GM10248 (cell line): ENCODE measurements at regions of chr1 and their contacts with region 1.

Region 1: DNA sequence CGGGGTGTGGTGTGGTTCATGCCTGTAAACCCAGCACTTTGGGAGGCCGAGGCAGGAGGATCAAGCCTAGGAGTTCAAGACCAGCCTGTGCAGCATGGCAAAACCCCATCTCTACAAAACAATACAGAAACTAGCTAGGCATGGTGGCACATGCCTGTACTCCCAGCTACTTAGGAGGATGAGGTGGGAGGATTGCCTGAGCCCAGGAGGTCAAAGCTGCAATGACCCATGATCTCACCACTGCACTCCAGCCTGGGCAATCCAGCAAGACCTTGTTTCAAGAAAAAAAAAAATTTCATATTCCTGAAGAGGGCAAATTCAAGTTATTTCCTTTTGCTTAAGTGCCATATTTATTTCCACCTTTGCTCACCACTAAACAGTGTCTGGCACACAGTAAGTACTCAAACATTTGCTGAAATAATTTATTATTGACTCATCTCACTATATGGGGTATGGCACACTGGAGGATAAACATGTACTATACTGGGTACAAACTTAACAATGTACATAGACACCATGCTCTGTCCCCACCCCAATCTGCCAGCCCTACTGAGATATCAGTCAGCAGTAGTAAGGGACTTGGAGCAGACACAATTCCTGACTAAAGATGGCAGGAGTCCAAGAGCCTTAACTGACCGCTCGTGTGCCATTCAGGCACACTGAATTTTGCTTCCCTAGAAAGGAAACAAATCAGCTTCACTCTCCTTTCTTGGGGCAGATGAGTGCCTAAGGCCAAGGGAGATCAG is 15.5 kb downstream of the MEAF6 start:
- DNase-seq: no peak
- CTCF ChIP-seq: no peak

Region 2: GRCh38 chr1:37391211-37392011 is 107.6 kb before region 1 on chr1:
- CTCF ChIA-PET with region 1: no interaction called
- POLR2A ChIA-PET with region 1: no interaction called
- DNase-seq: no peak
- CTCF ChIP-seq: no peak

Region 3: DNA sequence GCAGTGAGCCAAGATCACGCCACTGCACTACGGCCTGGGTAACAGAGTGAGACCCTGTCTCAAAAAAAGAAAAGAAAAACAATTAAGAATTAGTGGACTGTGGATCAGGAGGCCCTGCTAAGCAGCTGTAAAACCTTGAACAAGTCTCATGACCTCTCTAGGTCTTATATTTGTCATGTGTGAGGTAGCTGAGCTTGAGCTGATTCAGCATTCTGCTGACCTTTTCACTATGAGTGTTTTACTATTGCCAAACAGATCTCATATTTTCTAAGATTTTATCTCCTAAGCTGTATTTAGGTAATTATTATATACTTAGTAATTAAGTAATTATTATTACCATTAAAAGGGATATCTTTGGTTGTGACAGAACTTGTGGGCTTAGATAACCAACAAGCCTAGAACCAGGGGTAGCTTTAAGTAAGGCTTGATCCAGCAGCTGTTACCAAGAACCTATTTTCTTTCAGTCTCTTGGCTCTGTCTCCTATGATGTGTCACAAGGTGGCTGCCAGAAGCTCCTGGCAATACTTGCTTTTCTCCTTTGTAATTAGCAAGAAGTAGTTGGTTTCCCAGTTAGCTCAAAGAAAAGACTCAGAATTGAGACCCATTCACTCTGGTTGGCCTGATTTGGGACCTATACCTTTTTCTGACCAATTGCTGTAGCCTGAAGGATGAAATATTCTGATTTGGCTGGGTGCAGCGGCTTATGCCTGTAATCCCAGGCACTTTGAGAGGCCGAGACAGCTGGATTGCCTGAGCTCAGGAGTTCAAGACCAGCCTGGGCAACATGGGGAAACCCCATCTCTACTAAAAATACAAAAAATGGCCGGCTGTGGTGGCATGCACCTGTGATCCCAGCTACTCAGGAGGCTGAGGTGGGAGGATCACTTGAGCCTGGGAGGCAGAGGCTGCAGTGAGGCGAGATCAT is 33.2 kb before region 1 on chr1:
- CTCF ChIA-PET with region 1: no interaction called
- POLR2A ChIA-PET with region 1: no interaction called
- DNase-seq: no peak
- CTCF ChIP-seq: no peak

Region 4: GRCh38 chr1:37533317-37534093 is 34.5 kb after region 1 on chr1:
- CTCF ChIA-PET with region 1: no interaction called
- POLR2A ChIA-PET with region 1: interaction called, 10 read pairs
- DNase-seq: no peak
- CTCF ChIP-seq: no peak